Testis (tissue), 5 donors: ENCODE measurements at regions of chr14 and their contacts with region 1.

Region 1: DNA sequence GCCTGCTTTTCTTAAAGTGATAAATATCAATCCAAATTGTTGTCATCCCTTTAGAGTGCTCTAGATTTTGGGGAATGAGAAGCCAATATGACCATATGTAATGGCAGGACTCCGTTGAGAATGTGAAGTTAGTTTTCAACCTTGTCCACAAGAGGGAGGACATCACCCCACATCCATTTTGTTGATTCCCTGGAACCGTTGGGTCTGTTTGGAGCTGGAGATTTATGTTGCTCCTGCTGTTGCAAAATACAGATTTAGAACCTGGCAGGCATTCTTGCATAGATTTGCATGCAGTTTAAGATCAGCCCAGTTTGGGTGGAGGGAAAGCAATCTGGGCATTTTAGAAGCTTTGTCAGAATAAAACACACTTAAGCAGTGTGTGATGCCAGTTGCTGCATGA is 620.1 kb downstream of the NRXN3 start:
- DNase-seq: no peak
- H3K4me3 ChIP-seq: no peak overlapping the region
- H3K27ac ChIP-seq: no peak overlapping the region
- H3K4me1 ChIP-seq: no peaks in the 10 kb centered on the region
- H3K27me3 ChIP-seq: no peaks in the 10 kb centered on the region
- CTCF ChIP-seq: peak in 1 of 3 experiments; percentile 4
- POLR2A ChIP-seq: no peak

Region 2: DNA sequence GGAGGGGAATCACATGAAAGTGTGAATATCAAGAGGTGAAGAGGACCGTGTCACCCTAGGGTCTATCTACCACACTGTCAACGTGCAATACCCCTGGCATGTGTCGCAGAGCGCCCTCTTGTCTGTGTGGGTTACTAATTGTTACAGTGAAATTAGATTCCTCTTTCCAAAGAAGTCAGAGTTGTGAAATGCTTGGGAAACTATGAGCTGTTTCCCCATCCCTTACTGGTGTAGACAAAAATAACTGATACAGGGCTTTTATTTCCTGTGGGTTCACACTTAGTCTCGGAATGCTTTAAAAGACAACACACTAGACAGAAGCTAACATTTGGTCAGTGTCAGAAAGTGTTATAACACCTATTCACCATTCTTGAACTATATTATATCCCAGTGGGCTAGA is 22.8 kb before region 1 on chr14:
- intact Hi-C with region 1: loop called (anchors 2 kb)
- DNase-seq: no peak
- H3K4me3 ChIP-seq: no peak overlapping the region
- H3K27ac ChIP-seq: no peak overlapping the region
- H3K4me1 ChIP-seq: no peaks in the 10 kb centered on the region
- H3K27me3 ChIP-seq: no peaks in the 10 kb centered on the region
- CTCF ChIP-seq: no peak
- POLR2A ChIP-seq: no peak